ENCODE measurements at regions of chr14 and their contacts with region 1.

Region 1: DNA sequence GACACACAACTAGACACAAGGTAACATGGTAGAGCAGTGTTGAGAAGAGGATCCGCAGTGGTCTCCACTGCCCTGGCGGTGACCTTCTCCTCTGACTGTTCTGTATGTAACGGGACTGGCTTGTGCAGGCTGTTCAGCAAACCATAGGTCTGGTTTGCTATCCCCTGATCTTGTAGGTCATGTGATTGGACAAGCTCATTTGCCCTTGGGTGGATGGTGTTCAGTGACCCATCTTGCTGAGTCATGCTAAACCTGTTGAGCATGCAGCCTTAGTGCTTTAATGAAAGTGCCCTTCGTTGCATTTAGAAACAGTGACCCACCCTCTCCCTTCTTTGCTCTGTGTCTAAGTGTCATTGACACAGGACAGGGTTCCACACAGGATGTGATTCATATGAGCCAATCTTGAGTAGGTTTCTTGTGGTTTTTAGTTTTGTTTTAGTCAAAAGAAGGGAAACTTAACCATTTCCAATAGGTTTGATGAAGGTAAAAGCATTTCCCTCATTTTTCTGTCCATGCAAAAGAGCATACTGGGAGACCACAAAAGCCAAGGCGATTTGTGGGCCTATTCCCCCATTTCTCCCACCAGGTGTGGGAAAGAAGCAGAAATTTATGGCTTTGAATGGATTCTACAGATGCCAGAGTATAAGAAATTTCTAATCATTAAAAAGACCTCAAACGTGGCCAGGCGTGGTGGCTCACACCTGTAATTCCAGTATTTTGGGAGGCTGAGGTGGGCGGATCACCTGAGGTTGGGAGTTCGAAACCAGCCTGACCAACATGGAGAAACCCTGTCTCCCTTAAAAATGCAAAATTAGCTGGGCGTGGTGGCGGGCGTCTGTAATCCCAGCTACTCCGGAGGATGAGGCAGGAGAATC is 32.6 kb upstream of the HIF1A start:
- DNase-seq: peak; percentile 79
- H3K4me3 Mint-ChIP-seq: peak overlapping the region; percentile 63
- H3K27ac Mint-ChIP-seq: peak overlapping the region; percentile 98
- H3K4me1 Mint-ChIP-seq: peaks cover 69% of the 10 kb centered on the region
- H3K27me3 Mint-ChIP-seq: no peaks in the 10 kb centered on the region

Region 2: DNA sequence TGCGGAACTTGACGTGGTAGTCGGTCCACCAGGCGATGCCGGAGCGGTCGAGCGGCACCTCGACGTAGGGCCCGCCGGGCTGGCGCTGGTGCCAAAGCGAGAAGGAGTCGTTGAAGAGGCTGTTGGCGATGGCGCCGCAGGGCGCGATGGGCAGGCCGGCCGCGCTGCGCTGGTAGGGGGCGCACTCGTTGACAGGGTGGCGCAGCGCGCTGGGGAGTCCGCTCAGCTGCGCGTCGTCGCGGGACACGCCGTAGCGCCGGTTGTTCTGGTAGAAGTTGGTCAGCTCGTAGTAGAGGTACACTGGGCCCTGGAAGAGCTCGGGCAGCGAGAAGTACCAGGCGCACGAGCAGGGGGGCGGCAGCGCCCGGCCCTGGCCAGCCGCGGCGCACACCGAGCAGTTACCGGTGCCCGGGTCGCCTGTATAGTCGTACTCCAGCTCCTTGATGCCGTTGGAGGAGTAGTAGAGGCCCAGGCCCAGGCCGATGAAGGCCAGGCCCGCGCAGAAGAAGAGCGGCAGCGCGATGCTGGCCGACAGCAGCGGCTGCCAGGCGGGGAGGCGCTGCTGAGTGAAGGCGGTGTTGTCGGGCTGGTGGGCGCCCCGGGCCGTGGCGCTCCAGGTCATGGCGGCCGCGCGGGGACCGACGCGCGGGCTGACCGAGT is 382.0 kb before region 1 on chr14:
- CTCF ChIA-PET with region 1: no interaction called
- intact Hi-C with region 1: no loop called
- DNase-seq: peak; percentile 81
- H3K4me3 Mint-ChIP-seq: peak overlapping the region; percentile 88
- H3K27ac Mint-ChIP-seq: peak overlapping the region; percentile 67
- H3K4me1 Mint-ChIP-seq: peaks cover 29% of the 10 kb centered on the region
- H3K27me3 Mint-ChIP-seq: no peaks in the 10 kb centered on the region

Region 3: GRCh38 chr14:61342486-61342885 is 320.2 kb before region 1 on chr14:
- CTCF ChIA-PET with region 1: no interaction called
- intact Hi-C with region 1: loop called (anchors 5 kb)
- DNase-seq: peak; percentile 86
- H3K4me3 Mint-ChIP-seq: peak overlapping the region; percentile 66
- H3K27ac Mint-ChIP-seq: peak overlapping the region; percentile 97
- H3K4me1 Mint-ChIP-seq: peaks cover 96% of the 10 kb centered on the region
- H3K27me3 Mint-ChIP-seq: no peaks in the 10 kb centered on the region

Region 4: DNA sequence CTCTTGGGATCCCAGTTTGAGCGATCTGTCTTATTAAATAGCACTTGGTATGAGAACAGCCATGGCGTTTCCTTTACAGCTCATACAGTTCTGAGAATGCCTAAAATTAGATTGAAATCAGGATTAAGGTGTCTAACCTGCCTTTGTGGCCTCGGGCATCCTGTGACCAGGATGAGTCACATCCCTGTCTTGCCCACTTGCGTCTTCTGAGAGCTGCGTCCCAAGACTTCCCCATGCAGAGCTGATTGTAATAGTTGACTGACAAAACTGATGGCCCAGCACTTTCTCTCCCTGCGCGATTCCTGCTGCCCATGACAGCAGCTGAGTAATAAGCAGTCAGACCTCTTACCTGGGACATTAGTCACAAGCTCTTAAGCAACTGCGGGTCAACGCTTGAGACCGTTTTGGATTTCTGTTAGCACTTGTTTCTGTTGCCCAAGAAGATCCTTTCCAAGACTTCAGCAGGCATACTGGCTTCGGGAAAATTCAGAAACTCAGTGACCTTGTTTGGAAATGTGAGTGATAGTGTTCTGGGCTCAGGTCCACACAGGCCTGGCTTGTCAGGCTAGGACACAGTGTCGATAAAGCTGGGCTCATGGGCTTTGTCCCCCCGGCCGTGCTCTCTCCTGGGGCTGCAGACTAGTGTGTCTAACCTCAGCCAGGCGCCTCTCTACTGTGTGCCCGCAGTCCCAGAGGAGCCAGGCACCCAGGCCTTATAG is 137.2 kb before region 1 on chr14:
- CTCF ChIA-PET with region 1: no interaction called
- intact Hi-C with region 1: loop called (anchors 1 kb)
- DNase-seq: peak; percentile 91
- H3K4me3 Mint-ChIP-seq: peak overlapping the region; percentile 22
- H3K27ac Mint-ChIP-seq: peak overlapping the region; percentile 94
- H3K4me1 Mint-ChIP-seq: peaks cover 84% of the 10 kb centered on the region
- H3K27me3 Mint-ChIP-seq: no peaks in the 10 kb centered on the region

Region 5: GRCh38 chr14:61568572-61569131 is 94.0 kb before region 1 on chr14:
- CTCF ChIA-PET with region 1: interaction called, 4 read pairs
- intact Hi-C with region 1: loop called (anchors 1 kb)
- DNase-seq: peak; percentile 71
- H3K4me3 Mint-ChIP-seq: peak overlapping the region; percentile 73
- H3K27ac Mint-ChIP-seq: peak overlapping the region; percentile 91
- H3K4me1 Mint-ChIP-seq: peaks cover 87% of the 10 kb centered on the region
- H3K27me3 Mint-ChIP-seq: no peaks in the 10 kb centered on the region

Region 6: DNA sequence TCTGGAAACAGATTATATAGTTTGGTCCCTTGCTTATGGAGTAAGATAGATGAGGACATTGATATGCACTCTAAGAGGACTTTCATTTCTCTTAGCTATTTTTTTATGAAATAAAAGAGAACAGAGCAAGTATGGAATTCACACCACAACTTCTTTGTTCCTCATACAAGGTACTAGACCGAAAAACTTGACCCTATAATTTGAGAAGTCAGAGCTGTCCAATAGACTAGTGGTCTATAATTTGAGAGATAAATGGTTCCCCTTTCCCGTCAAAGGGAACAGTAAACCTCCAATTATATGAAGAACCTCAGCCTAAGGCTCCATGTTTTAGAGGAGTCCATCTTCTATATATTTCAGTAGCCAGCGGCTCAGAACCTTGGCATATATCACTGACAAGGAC is 25.9 kb before region 1 on chr14:
- CTCF ChIA-PET with region 1: no interaction called
- intact Hi-C with region 1: loop called (anchors 1 kb)
- DNase-seq: no peak
- H3K4me3 Mint-ChIP-seq: no peak overlapping the region
- H3K27ac Mint-ChIP-seq: peak overlapping the region; percentile 50
- H3K4me1 Mint-ChIP-seq: peaks cover 30% of the 10 kb centered on the region
- H3K27me3 Mint-ChIP-seq: no peaks in the 10 kb centered on the region

Region 7: GRCh38 chr14:61730756-61731373 is 68.2 kb after region 1 on chr14:
- CTCF ChIA-PET with region 1: no interaction called
- intact Hi-C with region 1: loop called (anchors 2 kb)
- DNase-seq: no peak
- H3K4me3 Mint-ChIP-seq: no peak overlapping the region
- H3K27ac Mint-ChIP-seq: peak overlapping the region; percentile 65
- H3K4me1 Mint-ChIP-seq: peaks cover 58% of the 10 kb centered on the region
- H3K27me3 Mint-ChIP-seq: no peaks in the 10 kb centered on the region

Measured in activated naive CD4-positive, alpha-beta T cell treated with anti-CD3 and anti-CD28 coated beads for 36 hours (primary cell).